ENCODE measurements at regions of chr15 and their contacts with region 1.

Region 1: GRCh38 chr15:65980824-65981456 is 111.6 kb downstream of the RAB11A start:
- DNase-seq: peak; percentile 75
- H3K4me3 Mint-ChIP-seq: no peak overlapping the region
- H3K27ac Mint-ChIP-seq: no peak overlapping the region
- H3K4me1 Mint-ChIP-seq: no peaks in the 10 kb centered on the region
- H3K27me3 Mint-ChIP-seq: peaks cover 35% of the 10 kb centered on the region
- CTCF ChIP-seq: peak; percentile 70

Region 2: DNA sequence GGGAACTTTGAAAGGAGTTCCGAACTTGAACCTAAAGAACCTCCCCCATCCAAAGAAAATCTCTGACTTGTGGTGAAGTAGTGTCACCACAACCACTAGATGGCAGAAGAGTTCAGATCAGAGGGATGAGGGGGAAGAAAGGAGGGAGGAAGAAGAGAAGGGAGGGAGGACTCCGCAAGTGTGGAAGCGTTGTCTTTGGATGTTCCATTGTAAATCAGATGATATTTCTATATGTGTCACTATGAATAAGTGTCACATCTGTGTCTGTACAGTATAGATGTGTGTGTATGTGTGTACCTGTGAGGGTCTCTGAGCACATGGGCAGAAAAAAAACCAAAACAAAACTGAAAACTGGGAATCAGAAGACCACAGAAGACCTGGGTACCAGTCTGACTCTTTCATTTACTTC is 342.3 kb before region 1 on chr15:
- CTCF ChIA-PET with region 1: no interaction called
- POLR2A ChIA-PET with region 1: no interaction called
- intact Hi-C with region 1: no loop called
- DNase-seq: peak; percentile 86
- H3K4me3 Mint-ChIP-seq: no peak overlapping the region
- H3K27ac Mint-ChIP-seq: no peak overlapping the region
- H3K4me1 Mint-ChIP-seq: peaks cover 17% of the 10 kb centered on the region
- H3K27me3 Mint-ChIP-seq: no peaks in the 10 kb centered on the region
- CTCF ChIP-seq: peak; percentile 73

Region 3: GRCh38 chr15:66066439-66066838 is 85.5 kb after region 1 on chr15:
- CTCF ChIA-PET with region 1: no interaction called
- POLR2A ChIA-PET with region 1: no interaction called
- intact Hi-C with region 1: loop called (anchors 10 kb)
- DNase-seq: no peak
- H3K4me3 Mint-ChIP-seq: no peak overlapping the region
- H3K27ac Mint-ChIP-seq: no peak overlapping the region
- H3K4me1 Mint-ChIP-seq: no peaks in the 10 kb centered on the region
- H3K27me3 Mint-ChIP-seq: no peaks in the 10 kb centered on the region
- CTCF ChIP-seq: no peak

Region 4: DNA sequence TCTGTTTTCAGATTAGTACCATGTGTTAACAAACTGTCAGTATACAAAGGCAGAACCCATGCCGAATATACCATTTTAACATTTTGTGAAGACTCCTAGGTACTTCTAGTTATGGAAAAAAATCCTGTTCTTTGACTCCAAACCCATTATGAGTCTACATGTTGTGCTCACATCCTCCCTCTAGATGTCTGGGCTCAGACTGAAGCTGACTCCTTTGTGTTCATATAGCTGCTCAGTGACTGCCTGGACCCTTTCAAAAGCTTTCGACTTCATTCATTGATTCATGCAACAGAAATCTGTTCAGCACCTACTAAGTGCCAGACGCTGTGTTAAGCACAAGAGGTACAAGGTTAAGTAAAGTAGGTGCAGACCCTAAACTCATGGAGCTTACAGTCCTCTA is 212.1 kb after region 1 on chr15:
- CTCF ChIA-PET with region 1: no interaction called
- POLR2A ChIA-PET with region 1: no interaction called
- intact Hi-C with region 1: loop called (anchors 1 kb)
- DNase-seq: peak; percentile 11
- H3K4me3 Mint-ChIP-seq: no peak overlapping the region
- H3K27ac Mint-ChIP-seq: no peak overlapping the region
- H3K4me1 Mint-ChIP-seq: peaks cover 6% of the 10 kb centered on the region
- H3K27me3 Mint-ChIP-seq: no peaks in the 10 kb centered on the region
- CTCF ChIP-seq: no peak

Region 5: DNA sequence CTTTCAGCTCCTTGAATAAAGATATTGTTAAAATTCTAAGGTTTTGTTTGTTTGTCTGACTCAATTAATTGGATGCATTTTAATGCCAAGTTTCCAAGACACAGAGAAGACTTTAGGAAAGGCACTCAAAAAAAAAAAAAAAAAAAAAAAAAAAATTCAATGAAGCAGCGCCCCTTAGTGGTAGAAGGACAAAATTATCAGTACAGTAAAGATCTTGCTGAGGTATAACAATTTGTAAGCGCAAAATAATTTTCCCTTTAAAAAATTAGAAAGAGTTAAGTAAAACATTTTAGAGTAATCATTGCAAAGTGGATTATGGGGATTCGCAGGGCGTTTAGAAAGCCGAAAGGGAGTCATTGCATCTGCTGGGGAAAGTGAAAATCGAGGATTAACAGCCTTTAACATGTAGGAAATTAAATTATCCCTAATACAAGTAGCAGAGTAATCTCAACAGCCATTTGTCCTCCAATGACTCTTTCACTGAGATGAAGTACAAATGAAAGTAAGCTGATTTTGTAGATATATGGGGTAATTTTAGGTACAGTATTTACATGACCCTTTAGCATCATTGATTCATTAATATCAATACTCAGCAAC is 306.6 kb after region 1 on chr15:
- CTCF ChIA-PET with region 1: interaction called, 14 read pairs
- POLR2A ChIA-PET with region 1: interaction called, 3 read pairs
- intact Hi-C with region 1: loop called (anchors 1 kb)
- DNase-seq: peak; percentile 56
- H3K4me3 Mint-ChIP-seq: no peak overlapping the region
- H3K27ac Mint-ChIP-seq: no peak overlapping the region
- H3K4me1 Mint-ChIP-seq: peaks cover 9% of the 10 kb centered on the region
- H3K27me3 Mint-ChIP-seq: no peaks in the 10 kb centered on the region
- CTCF ChIP-seq: peak; percentile 31

Region 6: DNA sequence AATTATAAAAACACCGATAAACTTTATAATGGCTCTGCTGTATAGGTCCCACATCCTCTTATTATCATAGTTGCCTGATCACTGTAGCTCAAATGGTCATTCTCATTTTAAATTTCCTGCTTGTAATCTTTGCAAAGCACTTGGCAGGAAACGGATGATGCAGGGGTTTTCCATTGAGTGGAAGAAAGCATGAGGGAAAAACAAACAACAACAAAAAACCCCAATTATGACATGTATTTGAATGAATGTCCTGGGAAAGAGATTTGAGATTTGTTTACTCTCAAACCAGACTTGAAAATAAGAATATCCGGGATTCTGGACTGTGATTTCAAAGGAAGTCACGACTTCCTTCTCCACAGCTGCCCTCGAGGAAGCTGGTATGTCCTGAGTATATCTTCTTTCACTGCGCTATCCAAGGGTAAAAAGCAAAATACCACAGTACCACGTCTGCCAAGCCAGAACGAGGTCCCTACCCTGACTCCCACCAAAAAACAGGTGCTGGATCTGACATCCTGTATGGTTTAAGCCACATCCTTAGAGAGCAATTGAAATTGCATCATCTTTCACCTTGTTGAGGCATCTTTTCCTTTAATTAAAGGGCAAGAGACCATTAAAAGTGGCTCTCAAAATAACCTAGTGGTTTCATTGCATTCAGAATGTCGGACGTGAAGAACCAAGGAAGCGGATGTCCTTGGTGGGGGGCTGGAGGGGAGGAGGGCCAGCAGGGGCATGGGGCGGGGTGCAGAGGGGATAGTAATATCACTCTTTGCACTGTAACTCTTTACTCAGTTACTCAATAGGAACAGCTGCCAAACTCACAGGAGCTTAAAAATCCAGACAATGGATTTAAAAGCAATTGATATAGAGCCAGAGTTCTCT is 389.1 kb after region 1 on chr15:
- CTCF ChIA-PET with region 1: no interaction called
- POLR2A ChIA-PET with region 1: no interaction called
- intact Hi-C with region 1: no loop called
- DNase-seq: peak; percentile 54
- H3K4me3 Mint-ChIP-seq: peak overlapping the region; percentile 48
- H3K27ac Mint-ChIP-seq: no peak overlapping the region
- H3K4me1 Mint-ChIP-seq: peaks cover 7% of the 10 kb centered on the region
- H3K27me3 Mint-ChIP-seq: no peaks in the 10 kb centered on the region
- CTCF ChIP-seq: no peak